PC-3 (cell line): ENCODE measurements at regions of chr21 and their contacts with region 1.

Region 1: GRCh38 chr21:26389971-26390641 is 183.0 kb downstream of the CYYR1 start:
- DNase-seq: peak; percentile 96
- ATAC-seq: peak; percentile 74
- H3K4me3 ChIP-seq: peak overlapping the region; percentile 29; the same call in 1 of the 2 replicates
- H3K27ac ChIP-seq: peak overlapping the region; percentile 95
- H3K4me1 ChIP-seq: peaks cover 40% of the 10 kb centered on the region
- H3K27me3 ChIP-seq: no peaks in the 10 kb centered on the region
- CTCF ChIP-seq: no peak

Region 2: GRCh38 chr21:26177746-26178426 is 212.2 kb before region 1 on chr21:
- CTCF ChIA-PET with region 1: no interaction called
- POLR2A ChIA-PET with region 1: no interaction called
- intact Hi-C with region 1: no loop called
- DNase-seq: no peak
- ATAC-seq: no peak
- H3K4me3 ChIP-seq: no peak overlapping the region
- H3K27ac ChIP-seq: no peak overlapping the region
- H3K4me1 ChIP-seq: no peaks in the 10 kb centered on the region
- H3K27me3 ChIP-seq: no peaks in the 10 kb centered on the region
- CTCF ChIP-seq: no peak

Region 3: DNA sequence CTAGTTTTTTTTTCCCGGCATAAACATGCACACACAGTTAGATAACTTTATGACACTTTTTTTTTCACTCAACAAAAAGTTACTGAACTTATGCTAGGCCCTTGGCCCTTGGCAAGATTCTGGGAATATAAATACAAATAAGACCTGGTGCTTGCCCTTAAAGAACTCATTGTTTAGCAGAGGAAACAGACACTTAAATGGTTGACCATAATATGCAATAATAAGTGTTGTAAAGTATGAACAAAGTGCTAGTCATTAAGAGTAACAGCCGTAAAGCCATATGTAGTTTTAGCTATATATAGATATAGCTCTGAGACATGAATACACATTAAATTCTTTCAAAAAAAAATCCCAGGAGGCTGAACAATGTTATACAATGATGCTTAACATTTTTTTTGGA is 15.3 kb before region 1 on chr21:
- CTCF ChIA-PET with region 1: no interaction called
- POLR2A ChIA-PET with region 1: no interaction called
- intact Hi-C with region 1: loop called (anchors 1 kb)
- DNase-seq: peak; percentile 15
- ATAC-seq: peak; percentile 83
- H3K4me3 ChIP-seq: no peak overlapping the region
- H3K27ac ChIP-seq: no peak overlapping the region
- H3K4me1 ChIP-seq: peaks cover 6% of the 10 kb centered on the region; the same call in 1 of the 2 replicates
- H3K27me3 ChIP-seq: no peaks in the 10 kb centered on the region
- CTCF ChIP-seq: no peak

Region 4: DNA sequence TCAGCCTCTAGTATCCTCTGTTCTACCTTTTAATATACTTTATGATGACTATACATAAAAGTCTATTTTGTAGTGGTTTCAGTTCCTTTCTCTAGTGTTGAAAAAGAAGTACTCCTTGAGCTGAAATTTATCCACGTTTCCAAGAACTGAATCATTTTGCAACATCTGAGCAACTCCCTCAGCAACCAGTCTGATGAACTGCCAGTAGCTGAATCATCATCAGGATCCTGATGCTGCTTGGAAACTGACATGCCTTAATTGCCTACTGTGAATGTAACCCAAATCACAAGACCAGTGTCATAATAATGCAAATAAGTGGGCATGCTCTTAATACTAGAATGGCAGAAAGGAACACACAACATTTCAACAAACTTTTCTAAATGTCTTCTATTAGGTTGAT is 79.7 kb after region 1 on chr21:
- CTCF ChIA-PET with region 1: no interaction called
- POLR2A ChIA-PET with region 1: no interaction called
- intact Hi-C with region 1: loop called (anchors 1 kb)
- DNase-seq: peak; percentile 71
- ATAC-seq: peak; percentile 98
- H3K4me3 ChIP-seq: no peak overlapping the region
- H3K27ac ChIP-seq: no peak overlapping the region
- H3K4me1 ChIP-seq: no peaks in the 10 kb centered on the region; the same call in 1 of the 2 replicates
- H3K27me3 ChIP-seq: no peaks in the 10 kb centered on the region
- CTCF ChIP-seq: no peak

Region 5: DNA sequence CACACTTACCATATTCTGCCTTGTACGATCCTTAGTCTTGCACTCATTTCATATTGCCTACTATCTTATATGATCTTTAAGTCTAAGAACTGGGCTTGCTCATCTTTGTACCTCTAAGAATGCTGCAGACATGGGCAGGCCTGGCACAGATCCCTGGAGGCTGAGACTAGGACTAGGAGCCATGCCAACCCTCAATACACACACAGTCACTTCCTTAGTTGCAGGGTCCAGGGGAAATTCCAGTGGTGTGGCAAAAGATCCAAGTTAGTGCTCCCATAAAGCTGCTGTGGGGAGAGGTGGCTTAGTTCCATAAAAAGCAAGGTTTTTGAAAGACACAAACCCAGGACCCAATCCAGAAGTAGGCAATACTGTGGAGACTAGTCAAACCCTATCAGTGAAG is 123.1 kb after region 1 on chr21:
- CTCF ChIA-PET with region 1: no interaction called
- POLR2A ChIA-PET with region 1: no interaction called
- intact Hi-C with region 1: loop called (anchors 2 kb)
- DNase-seq: peak; percentile 77
- ATAC-seq: peak; percentile 93
- H3K4me3 ChIP-seq: no peak overlapping the region
- H3K27ac ChIP-seq: peak overlapping the region; percentile 53
- H3K4me1 ChIP-seq: peaks cover 11% of the 10 kb centered on the region
- H3K27me3 ChIP-seq: no peaks in the 10 kb centered on the region
- CTCF ChIP-seq: no peak

Region 6: GRCh38 chr21:26587736-26588201 is 197.7 kb after region 1 on chr21:
- CTCF ChIA-PET with region 1: no interaction called
- POLR2A ChIA-PET with region 1: no interaction called
- intact Hi-C with region 1: loop called (anchors 1 kb)
- DNase-seq: peak; percentile 91
- ATAC-seq: peak; percentile 97
- H3K4me3 ChIP-seq: peak overlapping the region; percentile 41; the same call in 1 of the 2 replicates
- H3K27ac ChIP-seq: 0 out of 2 replicates have a peak overlapping the region, but pooled peaks have one; percentile 8
- H3K4me1 ChIP-seq: peaks cover 14% of the 10 kb centered on the region
- H3K27me3 ChIP-seq: no peaks in the 10 kb centered on the region
- CTCF ChIP-seq: no peak

Region 7: GRCh38 chr21:26684889-26685288 is 294.8 kb after region 1 on chr21:
- CTCF ChIA-PET with region 1: no interaction called
- POLR2A ChIA-PET with region 1: no interaction called
- intact Hi-C with region 1: loop called (anchors 2 kb)
- DNase-seq: peak; percentile 89
- ATAC-seq: peak; percentile 98
- H3K4me3 ChIP-seq: no peak overlapping the region
- H3K27ac ChIP-seq: peak overlapping the region; percentile 31; the same call in 1 of the 2 replicates
- H3K4me1 ChIP-seq: peaks cover 31% of the 10 kb centered on the region
- H3K27me3 ChIP-seq: no peaks in the 10 kb centered on the region
- CTCF ChIP-seq: no peak

Region 8: DNA sequence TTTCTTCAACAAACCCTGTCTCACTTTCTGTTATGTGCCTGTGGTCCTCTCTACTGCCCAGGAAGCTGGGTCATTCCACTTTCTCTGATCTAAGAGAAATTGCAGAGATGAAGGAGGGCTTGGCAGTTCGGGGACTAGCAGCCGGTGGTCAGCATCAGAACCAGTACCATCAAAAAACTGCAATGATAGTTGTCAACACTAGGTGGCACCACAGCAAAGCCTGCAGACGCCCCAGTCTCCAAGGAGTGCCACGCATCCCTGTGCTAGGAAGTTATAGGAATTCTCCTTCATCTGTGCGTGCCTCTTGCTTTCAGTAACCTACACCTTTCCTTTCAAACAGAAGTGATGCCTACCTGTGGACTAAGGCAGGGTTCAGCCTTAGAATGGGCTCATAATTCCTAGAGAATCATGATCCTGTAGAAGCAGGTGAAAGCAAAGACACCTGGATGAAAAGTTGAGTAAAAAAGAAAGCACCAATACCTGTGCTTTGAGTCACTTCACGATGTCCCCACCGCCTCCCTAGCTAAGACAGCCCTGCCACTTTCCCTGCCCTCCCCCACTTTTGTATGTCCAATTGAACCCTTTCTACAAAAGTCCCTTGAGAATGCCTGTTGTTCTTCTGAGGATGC is 325.9 kb after region 1 on chr21:
- CTCF ChIA-PET with region 1: no interaction called
- POLR2A ChIA-PET with region 1: no interaction called
- intact Hi-C with region 1: loop called (anchors 1 kb)
- DNase-seq: peak; percentile 80
- ATAC-seq: peak; percentile 82
- H3K4me3 ChIP-seq: peak overlapping the region; percentile 51
- H3K27ac ChIP-seq: no peak overlapping the region
- H3K4me1 ChIP-seq: peaks cover 13% of the 10 kb centered on the region; the same call in 1 of the 2 replicates
- H3K27me3 ChIP-seq: no peaks in the 10 kb centered on the region
- CTCF ChIP-seq: peak; percentile 90